Activated CD4-positive, alpha-beta memory T cell treated with anti-CD3 and anti-CD28 coated beads for 36 hours (primary cell): ENCODE measurements at regions of chr6 and their contacts with region 1.

Region 1: GRCh38 chr6:149043476-149044130 is 273.9 kb upstream of the TAB2 start:
- DNase-seq: peak; percentile 62
- H3K4me3 Mint-ChIP-seq: no peak overlapping the region
- H3K27ac Mint-ChIP-seq: no peak overlapping the region
- H3K4me1 Mint-ChIP-seq: peaks cover 50% of the 10 kb centered on the region
- H3K27me3 Mint-ChIP-seq: no peaks in the 10 kb centered on the region

Region 2: GRCh38 chr6:149060300-149060997 is 16.8 kb after region 1 on chr6:
- CTCF ChIA-PET with region 1: interaction called, 7 read pairs
- POLR2A ChIA-PET with region 1: interaction called, 4 read pairs
- intact Hi-C with region 1: loop called (anchors 2 kb)
- DNase-seq: peak; percentile 80
- H3K4me3 Mint-ChIP-seq: peak overlapping the region; percentile 68
- H3K27ac Mint-ChIP-seq: peak overlapping the region; percentile 91
- H3K4me1 Mint-ChIP-seq: peaks cover 58% of the 10 kb centered on the region
- H3K27me3 Mint-ChIP-seq: no peaks in the 10 kb centered on the region

Region 3: DNA sequence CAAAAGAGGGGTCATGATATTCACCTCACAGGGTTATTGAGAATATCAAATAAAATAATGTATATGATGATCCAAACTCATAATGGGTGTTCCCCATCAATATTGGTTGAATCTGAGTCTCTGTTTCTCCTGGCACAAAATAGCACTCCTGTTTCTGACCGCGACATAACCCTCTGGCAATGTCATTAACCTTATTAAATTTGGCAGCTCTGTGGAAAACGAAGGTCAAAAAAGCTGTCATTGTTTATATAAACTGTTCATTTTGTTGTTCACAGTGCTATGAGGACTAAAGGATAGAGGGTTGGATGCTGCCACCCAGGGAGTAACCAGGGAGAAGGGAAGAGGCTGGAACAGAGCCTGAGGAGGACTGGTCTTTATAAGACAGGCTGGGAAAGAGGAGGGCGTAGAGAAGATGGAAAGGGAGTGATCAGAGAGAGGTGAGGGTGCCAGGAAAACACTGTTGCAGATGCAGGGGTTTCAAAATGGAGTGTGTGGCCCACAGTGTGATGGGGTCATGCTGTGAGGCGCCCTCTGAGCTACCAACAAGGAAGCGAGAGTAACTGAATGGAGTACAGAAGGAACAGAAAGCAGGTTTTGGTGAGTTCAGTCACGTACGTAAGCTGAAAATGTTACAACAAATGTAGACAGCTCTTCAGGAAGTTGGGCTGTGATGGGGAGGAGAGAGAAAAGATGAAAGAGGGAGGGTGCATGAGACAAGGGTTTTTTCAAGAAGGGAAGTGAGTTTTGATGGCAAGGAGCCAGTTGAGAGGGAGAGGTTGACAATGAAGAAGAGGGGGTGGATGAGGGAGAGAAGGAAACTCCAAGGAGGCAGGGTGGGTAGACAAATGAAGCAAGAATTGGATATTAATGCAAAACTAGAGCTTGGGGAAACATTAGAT is 22.3 kb after region 1 on chr6:
- CTCF ChIA-PET with region 1: interaction called, 4 read pairs
- POLR2A ChIA-PET with region 1: interaction called, 4 read pairs
- intact Hi-C with region 1: loop called (anchors 1 kb)
- DNase-seq: peak; percentile 57
- H3K4me3 Mint-ChIP-seq: peak overlapping the region; percentile 33
- H3K27ac Mint-ChIP-seq: peak overlapping the region; percentile 93
- H3K4me1 Mint-ChIP-seq: peaks cover 50% of the 10 kb centered on the region
- H3K27me3 Mint-ChIP-seq: no peaks in the 10 kb centered on the region

Region 4: GRCh38 chr6:149075616-149076364 is 32.2 kb after region 1 on chr6:
- CTCF ChIA-PET with region 1: interaction called, 6 read pairs
- POLR2A ChIA-PET with region 1: interaction called, 8 read pairs
- intact Hi-C with region 1: loop called (anchors 1 kb)
- DNase-seq: peak; percentile 51
- H3K4me3 Mint-ChIP-seq: peak overlapping the region; percentile 7
- H3K27ac Mint-ChIP-seq: peak overlapping the region; percentile 93
- H3K4me1 Mint-ChIP-seq: peaks cover 40% of the 10 kb centered on the region
- H3K27me3 Mint-ChIP-seq: no peaks in the 10 kb centered on the region

Region 5: GRCh38 chr6:149102324-149102723 is 58.7 kb after region 1 on chr6:
- CTCF ChIA-PET with region 1: no interaction called
- POLR2A ChIA-PET with region 1: no interaction called
- intact Hi-C with region 1: no loop called
- DNase-seq: no peak
- H3K4me3 Mint-ChIP-seq: no peak overlapping the region
- H3K27ac Mint-ChIP-seq: no peak overlapping the region
- H3K4me1 Mint-ChIP-seq: peaks cover 11% of the 10 kb centered on the region
- H3K27me3 Mint-ChIP-seq: no peaks in the 10 kb centered on the region

Region 6: GRCh38 chr6:149484733-149485700 is 441.4 kb after region 1 on chr6 and contains the start of gene ZC3H12D:
- CTCF ChIA-PET with region 1: no interaction called
- POLR2A ChIA-PET with region 1: no interaction called
- intact Hi-C with region 1: no loop called
- DNase-seq: peak; percentile 92
- H3K4me3 Mint-ChIP-seq: peak within 1 kb of the TSS; percentile 98
- H3K27ac Mint-ChIP-seq: peak within 1 kb of the TSS; percentile 98
- H3K4me1 Mint-ChIP-seq: peaks cover 44% of the 10 kb centered on the region
- H3K27me3 Mint-ChIP-seq: no peaks in the 10 kb centered on the region
- total RNA-seq, gene ZC3H12D: 124 to 129 TPM

Region 7: DNA sequence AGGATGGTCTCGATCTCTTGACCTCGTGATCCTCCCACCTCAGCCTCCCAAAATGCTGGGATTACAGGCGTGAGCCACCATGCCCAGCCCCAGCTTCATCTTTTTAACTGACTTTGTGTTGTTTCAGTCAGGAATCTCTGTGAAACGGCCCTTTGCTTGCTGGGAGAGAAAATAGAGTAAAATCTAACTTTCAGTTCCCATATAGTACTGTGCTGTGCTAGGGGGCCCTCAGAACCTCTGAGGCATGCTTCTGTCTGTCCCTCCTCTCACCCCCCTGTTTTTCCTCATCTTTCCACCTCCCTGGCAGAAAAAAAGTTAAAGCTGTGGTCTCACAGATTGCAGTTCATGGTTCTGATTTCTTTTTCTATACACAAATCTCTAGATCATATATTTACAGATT is 772.2 kb after region 1 on chr6:
- CTCF ChIA-PET with region 1: no interaction called
- POLR2A ChIA-PET with region 1: no interaction called
- intact Hi-C with region 1: no loop called
- DNase-seq: no peak
- H3K4me3 Mint-ChIP-seq: no peak overlapping the region
- H3K27ac Mint-ChIP-seq: no peak overlapping the region
- H3K4me1 Mint-ChIP-seq: peaks cover 2% of the 10 kb centered on the region
- H3K27me3 Mint-ChIP-seq: no peaks in the 10 kb centered on the region